ENCODE measurements at regions of chr3 and their contacts with region 1.

Region 1: GRCh38 chr3:42690766-42691680 is 5.7 kb downstream of the KLHL40 start:
- DNase-seq: peak in 1 of 2 donors; percentile 80
- H3K4me3 ChIP-seq: no peak overlapping the region
- CTCF ChIP-seq: no peak
- POLR2A ChIP-seq: no peak

Region 2: GRCh38 chr3:42755681-42756578 is 64.9 kb after region 1 on chr3:
- intact Hi-C with region 1: no loop called
- DNase-seq: peak in 1 of 2 donors; percentile 68
- H3K4me3 ChIP-seq: no peak overlapping the region
- CTCF ChIP-seq: peak in 1 of 3 donors; percentile 53
- POLR2A ChIP-seq: no peak

Region 3: GRCh38 chr3:42964266-42964665 is 273.2 kb after region 1 on chr3:
- intact Hi-C with region 1: no loop called
- DNase-seq: no peak
- H3K4me3 ChIP-seq: no peak overlapping the region
- CTCF ChIP-seq: no peak
- POLR2A ChIP-seq: no peak

Region 4: DNA sequence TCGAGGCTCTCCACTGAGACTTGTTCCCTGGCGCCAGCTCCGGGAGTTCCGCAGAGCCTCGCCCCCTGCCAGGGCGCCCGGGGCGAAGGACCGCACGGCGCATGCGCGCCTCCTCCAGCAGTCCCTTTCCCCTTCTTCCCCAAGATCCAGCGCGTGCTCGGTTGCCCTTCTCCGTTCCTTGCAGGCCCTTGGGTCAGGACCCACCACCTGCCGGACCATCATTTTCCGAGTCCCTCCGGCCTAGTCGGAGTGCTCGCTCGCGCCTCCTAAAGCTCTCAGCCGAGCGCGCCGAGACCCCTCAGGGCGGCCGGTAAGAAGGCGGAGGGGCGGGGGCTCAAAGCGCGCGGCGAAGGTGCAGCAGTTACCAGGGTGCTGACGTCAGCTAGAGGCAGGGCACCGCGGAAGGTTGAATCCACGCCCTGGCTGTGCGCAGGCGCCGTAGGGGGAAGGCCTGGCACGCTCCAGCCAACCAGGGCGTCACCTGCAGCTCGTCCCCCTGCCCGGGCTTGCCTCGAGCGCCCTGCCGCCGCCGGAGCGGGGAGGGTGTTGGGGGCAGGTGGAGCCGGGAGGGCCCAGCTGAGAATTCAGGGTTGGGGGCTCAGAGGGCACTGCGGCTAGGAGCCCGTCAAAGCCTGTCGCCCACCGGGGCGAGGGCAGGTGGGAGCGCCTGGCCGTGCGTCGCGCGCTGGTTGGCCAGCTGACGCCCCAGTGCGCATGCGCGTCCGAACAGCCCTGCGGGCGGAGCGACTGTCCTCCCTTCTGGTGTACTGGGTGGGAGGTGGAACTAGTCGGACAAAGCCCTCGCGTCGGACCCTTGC is 1647.2 kb after region 1 on chr3 and contains the start of gene TCAIM:
- intact Hi-C with region 1: loop called (anchors 5 kb)
- DNase-seq: peak; percentile 95 to 99
- H3K4me3 ChIP-seq: peak within 1 kb of the TSS; percentile 77
- CTCF ChIP-seq: no peak
- POLR2A ChIP-seq: no peak
- total RNA-seq, gene TCAIM: 16.6 to 20.0 (median 18.5) TPM